Activated CD8-positive, alpha-beta T cell treated with anti-CD3 and anti-CD28 coated beads for 36 hours (primary cell): ENCODE measurements at regions of chr3 and their contacts with region 1.

Region 1: DNA sequence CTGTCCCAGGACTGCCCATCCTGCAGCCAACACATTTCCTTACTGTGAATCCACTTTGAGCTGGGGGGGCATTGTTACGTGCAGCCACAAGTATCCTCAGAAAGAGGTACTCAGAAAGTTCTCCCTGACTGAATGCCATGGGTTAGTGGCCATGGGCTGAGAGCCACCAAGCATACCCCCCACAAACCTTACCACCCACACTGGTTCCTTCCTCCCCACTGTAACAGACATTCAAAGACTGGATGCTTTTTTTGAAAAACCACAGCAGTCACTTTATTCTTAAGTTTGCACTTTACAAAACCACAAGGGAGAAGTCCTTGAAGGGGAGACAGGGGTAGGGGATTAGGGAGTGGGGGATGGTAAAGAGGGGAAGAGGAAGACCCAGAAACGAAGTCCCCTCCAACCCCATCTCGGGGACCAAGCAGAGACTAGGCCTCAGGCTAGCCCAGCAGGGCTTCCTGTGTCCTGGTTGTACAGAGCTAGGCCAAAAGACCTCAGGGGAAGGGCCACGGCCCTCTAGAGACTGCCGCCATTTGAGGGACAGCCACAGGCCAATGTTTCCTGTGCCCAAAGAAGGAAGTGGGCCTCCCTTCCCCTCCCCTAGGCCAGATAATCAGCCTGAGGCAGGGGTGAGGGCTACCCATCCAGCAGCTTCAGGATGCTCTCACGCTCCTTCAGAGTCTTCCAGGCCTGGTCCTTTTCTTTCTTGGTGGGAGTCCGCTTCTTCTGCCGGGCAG is 10.1 kb upstream of the CAMK1 start:
- DNase-seq: peak; percentile 79
- ATAC-seq: peak; percentile 57
- H3K4me3 Mint-ChIP-seq: peak overlapping the region; percentile 22
- H3K27ac Mint-ChIP-seq: peak overlapping the region; percentile 97
- H3K4me1 Mint-ChIP-seq: peaks cover 64% of the 10 kb centered on the region
- H3K27me3 Mint-ChIP-seq: no peaks in the 10 kb centered on the region
- CTCF ChIP-seq: no peak

Region 2: GRCh38 chr3:9749645-9750555 is 30.0 kb before region 1 on chr3 and contains the start of gene OGG1:
- CTCF ChIA-PET with region 1: no interaction called
- POLR2A ChIA-PET with region 1: interaction called, 16 read pairs
- intact Hi-C with region 1: no loop called
- DNase-seq: peak; percentile 100
- ATAC-seq: peak; percentile 89
- H3K4me3 Mint-ChIP-seq: peak within 1 kb of the TSS; percentile 88
- H3K27ac Mint-ChIP-seq: peak within 1 kb of the TSS; percentile 94
- H3K4me1 Mint-ChIP-seq: peaks cover 45% of the 10 kb centered on the region
- H3K27me3 Mint-ChIP-seq: no peaks in the 10 kb centered on the region
- CTCF ChIP-seq: no peak
- total RNA-seq, gene OGG1: 32.4 to 39.3 TPM

Region 3: GRCh38 chr3:9769426-9770275 is 10.2 kb before region 1 on chr3 and contains the start of gene CAMK1:
- CTCF ChIA-PET with region 1: no interaction called
- POLR2A ChIA-PET with region 1: interaction called, 25 read pairs
- intact Hi-C with region 1: no loop called
- DNase-seq: peak; percentile 80
- ATAC-seq: peak; percentile 97
- H3K4me3 Mint-ChIP-seq: peak within 1 kb of the TSS; percentile 82
- H3K27ac Mint-ChIP-seq: peak within 1 kb of the TSS; percentile 76
- H3K4me1 Mint-ChIP-seq: peaks cover 32% of the 10 kb centered on the region
- H3K27me3 Mint-ChIP-seq: no peaks in the 10 kb centered on the region
- CTCF ChIP-seq: no peak
- total RNA-seq, gene CAMK1: 41.7 to 45.7 TPM